Vagina (tissue), 2 donors: ENCODE measurements at regions of chr7 and their contacts with region 1.

Region 1: GRCh38 chr7:95011146-95011928 is 103.9 kb downstream of the PPP1R9A start:
- DNase-seq: no peak
- H3K4me3 ChIP-seq: no peak overlapping the region
- H3K27ac ChIP-seq: no peak overlapping the region
- H3K4me1 ChIP-seq: no peaks in the 10 kb centered on the region
- H3K27me3 ChIP-seq: no peaks in the 10 kb centered on the region
- CTCF ChIP-seq: no peak
- POLR2A ChIP-seq: no peak

Region 2: GRCh38 chr7:94888551-94888950 is 122.8 kb before region 1 on chr7:
- intact Hi-C with region 1: no loop called
- DNase-seq: no peak
- H3K4me3 ChIP-seq: no peak overlapping the region
- H3K27ac ChIP-seq: no peak overlapping the region
- H3K4me1 ChIP-seq: no peaks in the 10 kb centered on the region
- H3K27me3 ChIP-seq: no peaks in the 10 kb centered on the region
- CTCF ChIP-seq: no peak
- POLR2A ChIP-seq: no peak

Region 3: DNA sequence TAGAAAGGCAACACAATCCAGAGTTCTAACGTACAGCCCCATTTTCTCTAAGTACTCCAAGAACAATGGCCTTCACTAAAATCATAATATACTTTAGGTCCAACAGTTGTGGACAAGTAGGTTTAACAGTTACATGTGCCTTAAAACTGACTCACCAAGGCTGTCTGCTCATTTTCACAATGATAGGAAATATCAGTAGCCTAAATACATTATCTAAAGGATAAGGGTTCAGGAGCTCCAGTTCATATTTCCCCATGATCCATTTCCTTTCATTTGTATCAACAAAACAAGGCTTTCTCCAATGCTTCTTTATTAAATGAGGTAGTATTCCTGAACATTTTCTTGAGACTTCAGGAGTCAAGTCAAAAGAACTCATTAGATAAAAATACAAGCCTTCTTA is 1146.5 kb after region 1 on chr7:
- intact Hi-C with region 1: loop called (anchors 5 kb)
- DNase-seq: no peak
- H3K4me3 ChIP-seq: no peak overlapping the region
- H3K27ac ChIP-seq: no peak overlapping the region
- H3K4me1 ChIP-seq: no peaks in the 10 kb centered on the region
- H3K27me3 ChIP-seq: no peaks in the 10 kb centered on the region
- CTCF ChIP-seq: no peak
- POLR2A ChIP-seq: no peak